ENCODE measurements at regions of chr5 and their contacts with region 1.

Region 1: GRCh38 chr5:151115274-151115905 is 34.6 kb upstream of the TNIP1 start:
- H3K4me3 ChIP-seq: no peak overlapping the region
- H3K27ac ChIP-seq: no peak overlapping the region
- H3K4me1 ChIP-seq: no peaks in the 10 kb centered on the region
- CTCF ChIP-seq: peak; percentile 54

Region 2: GRCh38 chr5:151002250-151002649 is 113.1 kb before region 1 on chr5:
- CTCF ChIA-PET with region 1: interaction called, 38 read pairs
- POLR2A ChIA-PET with region 1: interaction called, 3 read pairs
- H3K4me3 ChIP-seq: no peak overlapping the region
- H3K27ac ChIP-seq: no peak overlapping the region
- H3K4me1 ChIP-seq: no peaks in the 10 kb centered on the region
- CTCF ChIP-seq: no peak

Region 3: DNA sequence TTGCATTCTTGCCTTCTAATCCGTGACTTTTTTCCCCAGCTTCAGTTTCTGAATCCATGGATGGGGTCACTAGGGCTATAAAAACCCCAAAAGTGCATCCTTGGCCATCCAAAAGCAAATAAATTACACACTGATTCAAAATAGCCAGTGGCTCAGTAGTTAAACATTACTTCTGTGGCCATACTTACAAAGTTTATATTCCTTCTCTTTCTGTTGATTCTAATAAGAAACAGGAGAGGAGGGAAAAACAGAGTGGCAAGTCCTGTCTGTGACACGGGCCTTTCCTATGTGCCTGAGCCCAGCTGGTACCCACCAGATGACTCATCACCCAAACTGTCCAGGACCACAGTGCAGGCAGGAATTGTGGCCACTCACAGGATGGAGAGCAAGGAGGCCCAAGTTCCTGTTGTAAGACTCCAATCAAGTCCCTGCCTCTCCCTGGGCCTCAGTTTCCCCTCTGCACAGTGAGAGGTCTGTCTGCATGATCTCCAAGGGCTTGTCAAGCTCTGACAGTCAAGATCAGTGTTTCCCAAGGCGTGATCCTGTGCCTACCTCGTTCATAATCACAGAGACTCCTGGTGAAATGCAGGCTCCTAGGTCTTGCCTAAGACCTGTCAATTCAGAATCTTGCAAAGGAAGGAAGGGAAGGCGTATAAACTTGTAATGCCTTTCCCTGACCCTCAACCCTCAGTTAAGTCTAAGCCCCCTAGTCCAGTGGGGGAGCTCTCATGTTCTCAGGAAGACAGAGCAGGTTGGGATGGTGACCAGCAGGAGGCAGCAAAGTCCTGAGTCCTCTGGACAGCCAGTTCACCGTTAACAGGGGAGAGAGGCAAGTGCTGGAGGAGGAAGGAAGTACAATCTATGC is 64.1 kb before region 1 on chr5:
- CTCF ChIA-PET with region 1: interaction called, 247 read pairs
- POLR2A ChIA-PET with region 1: no interaction called
- H3K4me3 ChIP-seq: no peak overlapping the region
- H3K27ac ChIP-seq: no peak overlapping the region
- H3K4me1 ChIP-seq: no peaks in the 10 kb centered on the region
- CTCF ChIP-seq: peak; percentile 83; the same call in 1 of the 2 replicates

Region 4: DNA sequence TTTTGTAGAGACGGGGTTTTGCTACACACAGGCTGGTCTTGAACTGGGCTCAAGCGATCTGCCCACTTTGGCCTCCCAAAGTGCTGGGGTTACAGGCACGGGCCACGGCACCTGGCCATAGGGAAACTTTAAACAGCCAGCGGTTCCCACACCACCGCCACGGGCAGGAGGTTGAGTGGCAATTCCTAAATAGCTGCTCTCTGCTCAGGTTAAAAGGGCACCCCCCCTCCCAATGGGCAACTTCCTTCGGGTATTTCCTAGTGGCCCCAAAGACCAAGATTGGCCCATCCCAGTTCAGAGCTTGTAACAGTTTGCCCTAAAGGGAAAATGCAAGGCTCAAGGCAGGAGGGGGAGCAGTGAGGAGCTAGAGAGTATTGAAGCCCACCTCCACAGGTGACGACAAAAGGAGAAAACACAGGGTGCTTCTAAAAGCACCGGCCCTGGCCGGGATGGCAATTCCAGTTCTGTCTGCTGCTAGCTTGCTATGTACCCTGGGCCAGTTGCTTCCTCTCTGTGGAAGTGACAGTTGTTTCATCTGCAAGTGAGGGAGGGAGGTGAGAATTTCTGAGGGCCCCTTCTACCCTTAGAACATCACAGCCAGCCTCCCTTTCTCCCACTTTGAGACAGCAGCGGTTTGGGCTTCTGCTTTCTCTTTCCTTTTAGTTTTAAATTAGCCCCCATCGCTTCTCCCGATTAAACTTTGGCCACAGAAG is 17.4 kb before region 1 on chr5:
- CTCF ChIA-PET with region 1: interaction called, 19 read pairs
- POLR2A ChIA-PET with region 1: no interaction called
- H3K4me3 ChIP-seq: no peak overlapping the region
- H3K27ac ChIP-seq: no peak overlapping the region
- H3K4me1 ChIP-seq: no peaks in the 10 kb centered on the region
- CTCF ChIP-seq: no peak

Region 5: GRCh38 chr5:151183451-151184245 is 68.3 kb after region 1 on chr5:
- CTCF ChIA-PET with region 1: no interaction called
- POLR2A ChIA-PET with region 1: no interaction called
- H3K4me3 ChIP-seq: no peak overlapping the region
- H3K27ac ChIP-seq: no peak overlapping the region
- H3K4me1 ChIP-seq: no peaks in the 10 kb centered on the region
- CTCF ChIP-seq: no peak

Region 6: GRCh38 chr5:151239237-151239861 is 124.0 kb after region 1 on chr5:
- CTCF ChIA-PET with region 1: interaction called, 12 read pairs
- POLR2A ChIA-PET with region 1: no interaction called
- H3K4me3 ChIP-seq: no peak overlapping the region
- H3K27ac ChIP-seq: no peak overlapping the region
- H3K4me1 ChIP-seq: no peaks in the 10 kb centered on the region
- CTCF ChIP-seq: peak; percentile 61